A673 (cell line): ENCODE measurements at regions of chr2 and their contacts with region 1.

Region 1: GRCh38 chr2:218292048-218293014 is at the start of gene TMBIM1:
- DNase-seq: peak; percentile 86
- H3K4me3 ChIP-seq: peak within 1 kb of the TSS; percentile 82
- H3K27ac ChIP-seq: peak within 1 kb of the TSS; percentile 84
- H3K4me1 ChIP-seq: peaks cover 23% of the 10 kb centered on the region
- H3K27me3 ChIP-seq: no peaks in the 10 kb centered on the region
- CTCF ChIP-seq: peak; percentile 70
- total RNA-seq, gene TMBIM1: 40.2 and 43.9 TPM in 2 replicates

Region 2: DNA sequence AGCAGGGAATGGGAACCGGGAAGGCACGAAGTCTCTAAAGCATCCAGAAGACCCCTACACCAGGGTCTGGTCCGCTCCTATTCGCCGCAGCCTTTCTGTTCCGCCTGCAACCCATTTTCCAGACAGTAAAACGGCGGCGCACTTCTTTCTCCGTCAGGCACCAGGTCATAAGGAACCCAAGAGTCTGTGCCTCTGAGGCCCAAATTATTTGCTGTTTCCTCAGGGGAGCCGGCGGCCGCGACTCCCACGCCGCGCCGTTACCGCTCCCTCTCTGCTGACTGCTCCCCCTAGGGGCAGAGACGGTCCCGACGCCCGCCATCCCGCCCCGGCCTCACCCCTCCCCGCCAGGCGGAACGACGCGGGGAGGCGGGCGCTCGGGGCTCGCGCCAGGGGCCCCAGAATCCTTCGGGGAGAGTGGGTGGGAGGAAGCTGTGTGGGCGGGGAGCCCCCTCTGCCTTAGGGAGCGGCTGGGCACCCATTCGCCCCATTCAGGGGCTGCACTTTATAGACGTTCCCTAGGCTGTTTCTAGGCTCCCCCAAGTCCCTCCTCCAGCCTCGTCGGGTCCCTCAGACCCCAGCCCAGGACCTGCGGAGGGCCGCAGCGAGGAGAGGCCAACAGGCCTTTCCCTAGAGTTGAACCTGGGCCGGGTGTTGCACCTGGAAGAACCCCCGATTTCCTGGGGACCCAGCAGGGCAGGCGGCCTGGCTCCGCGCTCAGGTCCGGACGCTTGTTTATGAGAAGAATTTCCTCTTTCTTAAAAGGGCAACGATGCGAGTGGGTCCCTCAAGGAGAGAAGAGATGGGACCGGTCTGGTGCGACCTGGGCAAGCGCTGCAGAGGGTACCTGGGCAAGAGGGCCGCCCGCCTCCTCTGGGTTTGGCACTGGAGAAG is 103.7 kb after region 1 on chr2:
- CTCF ChIA-PET with region 1: interaction called, 4 read pairs
- POLR2A ChIA-PET with region 1: no interaction called
- intact Hi-C with region 1: loop called (anchors 2 kb)
- DNase-seq: peak; percentile 98
- H3K4me3 ChIP-seq: peak overlapping the region; percentile 97
- H3K27ac ChIP-seq: peak overlapping the region; percentile 91
- H3K4me1 ChIP-seq: peaks cover 37% of the 10 kb centered on the region
- H3K27me3 ChIP-seq: no peaks in the 10 kb centered on the region
- CTCF ChIP-seq: peak; percentile 87

Region 3: GRCh38 chr2:218648088-218648786 is 355.9 kb after region 1 on chr2:
- CTCF ChIA-PET with region 1: no interaction called
- POLR2A ChIA-PET with region 1: no interaction called
- intact Hi-C with region 1: loop called (anchors 5 kb)
- DNase-seq: peak; percentile 72
- H3K4me3 ChIP-seq: no peak overlapping the region
- H3K27ac ChIP-seq: no peak overlapping the region
- H3K4me1 ChIP-seq: no peaks in the 10 kb centered on the region
- H3K27me3 ChIP-seq: no peaks in the 10 kb centered on the region
- CTCF ChIP-seq: peak; percentile 93